Sciatic nerve (tissue), 2 donors: ENCODE measurements at regions of chr20 and their contacts with region 1.

Region 1: GRCh38 chr20:38373231-38373867 is 27.1 kb downstream of the LBP start:
- DNase-seq: no peak
- ATAC-seq: peak; percentile 92

Region 2: DNA sequence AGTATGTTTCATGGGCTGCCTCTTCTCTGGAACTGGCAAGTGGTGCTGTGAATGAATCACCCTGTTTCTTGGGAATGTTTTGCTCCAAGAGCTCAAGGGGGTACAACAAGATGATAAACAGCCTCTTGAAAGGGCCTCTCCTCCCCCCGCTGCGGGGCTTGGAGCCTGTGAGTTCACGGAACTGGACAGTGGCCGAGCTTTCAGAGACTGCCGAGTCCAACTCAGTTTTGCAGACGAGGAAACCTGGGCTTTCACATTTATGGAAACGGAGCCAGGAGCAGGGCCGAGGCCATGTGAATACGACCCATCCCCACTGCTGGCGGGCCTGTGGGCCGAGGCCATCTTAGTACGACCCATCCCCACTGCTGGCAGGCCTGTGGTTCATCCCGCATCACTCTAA is 1045.6 kb before region 1 on chr20:
- intact Hi-C with region 1: no loop called
- DNase-seq: peak; percentile 81
- ATAC-seq: peak; percentile 94

Region 3: GRCh38 chr20:38343311-38344106 is 29.8 kb before region 1 on chr20:
- intact Hi-C with region 1: no loop called
- DNase-seq: peak; percentile 85
- ATAC-seq: peak; percentile 74

Region 4: DNA sequence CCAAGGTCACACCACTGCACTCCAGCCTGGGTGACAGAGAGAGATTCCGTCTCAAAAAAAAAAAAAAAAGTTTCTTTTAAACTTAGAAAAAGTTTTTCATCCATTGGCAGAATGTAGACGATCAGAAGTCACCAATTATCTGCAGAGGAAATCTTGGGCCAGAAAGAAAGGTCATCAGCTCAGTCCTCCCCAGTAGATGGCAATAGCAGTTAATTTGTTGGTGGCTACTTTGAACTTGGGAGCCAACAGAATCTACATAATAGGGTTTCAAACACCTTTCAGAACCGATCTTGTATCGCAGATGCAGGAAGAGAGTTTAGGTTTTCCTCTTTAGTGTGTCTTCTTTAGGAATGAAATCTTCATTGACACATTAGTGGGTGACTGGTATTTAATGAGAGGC is 14.6 kb after region 1 on chr20:
- intact Hi-C with region 1: loop called (anchors 1 kb)
- DNase-seq: no peak
- ATAC-seq: no peak

Region 5: DNA sequence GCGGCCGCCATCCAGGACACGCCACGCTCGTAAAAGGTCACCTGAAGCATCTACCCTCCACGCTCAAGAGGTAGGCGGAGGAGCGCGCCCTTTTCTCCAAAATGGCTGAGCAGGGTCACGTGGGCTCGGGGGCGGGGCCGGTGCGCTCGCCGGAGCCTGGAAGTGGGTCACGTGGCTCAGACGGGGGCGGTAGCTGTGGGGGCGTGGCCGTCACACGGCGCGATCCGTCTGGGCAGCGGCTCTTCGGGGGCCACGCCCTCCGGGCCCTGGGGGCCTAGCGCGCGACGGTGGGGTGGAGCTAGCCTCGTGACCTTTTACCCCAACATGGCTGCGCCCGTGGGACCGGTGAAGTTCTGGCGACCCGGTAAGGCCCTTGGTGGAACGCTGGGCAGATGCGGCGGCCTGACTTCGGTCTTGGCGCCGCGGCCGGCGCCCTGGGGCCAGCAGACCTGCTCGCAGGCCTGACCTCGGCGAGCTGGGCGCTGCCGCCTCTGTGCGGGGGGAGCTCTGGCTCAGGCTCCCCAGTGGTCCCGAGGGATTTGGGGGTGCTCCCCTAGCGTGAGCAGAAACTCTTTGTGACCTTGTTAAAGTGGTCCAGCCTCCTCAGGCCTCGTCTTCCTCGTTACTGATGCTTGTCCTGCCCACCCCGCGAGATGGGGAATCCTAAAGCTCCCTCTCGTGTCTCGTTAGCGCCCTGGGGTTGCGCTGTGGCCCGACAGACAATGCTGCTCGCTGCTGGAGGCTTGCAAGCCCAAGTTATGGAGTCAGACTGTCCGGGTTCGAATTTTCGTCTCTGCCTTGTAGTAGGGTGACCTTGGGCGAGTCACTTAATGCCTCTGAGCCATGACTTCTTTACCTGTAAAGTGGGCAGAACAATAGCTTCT is 588.9 kb after region 1 on chr20 and contains the start of gene DHX35:
- intact Hi-C with region 1: no loop called
- DNase-seq: peak; percentile 99
- ATAC-seq: peak; percentile 100
- total RNA-seq, gene DHX35: 11.3 TPM

Region 6: DNA sequence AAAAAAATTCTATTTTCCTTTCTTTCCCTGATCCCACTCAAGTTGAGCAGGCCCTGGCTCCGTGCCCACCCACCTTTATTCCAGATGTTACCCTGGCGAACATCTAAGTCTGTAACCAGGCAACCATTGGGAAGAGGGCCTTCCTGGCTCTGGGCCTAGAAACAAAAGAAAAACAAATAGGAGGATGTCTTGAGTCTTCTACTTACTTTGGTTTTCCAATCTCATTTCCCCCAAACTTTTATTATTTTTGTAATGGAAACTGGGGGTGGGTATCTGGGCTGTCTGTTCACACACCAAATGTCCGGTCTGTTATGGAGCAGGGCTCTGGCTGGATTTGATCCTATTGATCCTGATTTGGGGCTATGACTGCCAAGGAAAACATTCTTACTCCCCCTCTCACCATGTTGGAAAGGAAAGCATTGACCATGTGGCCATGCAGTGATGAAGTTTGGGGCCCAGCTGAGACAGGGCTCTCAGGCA is 1332.9 kb after region 1 on chr20:
- intact Hi-C with region 1: no loop called
- DNase-seq: peak; percentile 63
- ATAC-seq: no peak